Naive thymus-derived CD8-positive, alpha-beta T cell (primary cell): ENCODE measurements at regions of chr10 and their contacts with region 1.

Region 1: GRCh38 chr10:29735596-29736318 is 101.0 kb upstream of the SVIL start:
- DNase-seq: peak; percentile 63 to 85 (median 78)
- ATAC-seq: peak; percentile 78 to 79
- H3K4me3 Mint-ChIP-seq: peak overlapping the region; percentile 79 to 92 (median 84)
- H3K27ac Mint-ChIP-seq: peak overlapping the region in 5 of 10 donors; percentile 56 to 92 (median 81)
- H3K4me1 Mint-ChIP-seq: peaks cover 19 to 48% (median 43%) of the 10 kb centered on the region in 4 donors
- H3K27me3 Mint-ChIP-seq: peaks cover 0 to 2% (median 0%) of the 10 kb centered on the region in 5 donors

Region 2: DNA sequence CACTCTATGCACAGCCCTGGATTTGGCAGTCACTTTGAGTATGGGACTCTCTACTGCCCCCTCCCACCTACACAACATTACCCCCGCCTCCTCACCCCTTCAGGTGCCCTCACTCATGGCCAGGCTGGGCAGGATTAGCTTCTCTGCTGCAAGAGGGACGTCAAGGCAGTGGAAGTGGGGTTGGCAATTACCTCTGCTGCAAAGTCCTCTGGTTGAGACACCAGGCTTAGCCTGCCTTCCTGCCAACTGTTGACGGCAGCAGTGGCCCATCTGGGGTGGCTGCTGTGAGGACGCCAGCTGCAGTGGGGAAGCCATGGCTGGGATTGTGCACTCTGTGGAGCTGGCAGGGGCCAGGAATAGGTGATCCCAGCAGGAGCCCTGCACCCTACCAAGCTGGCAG is 127.7 kb before region 1 on chr10:
- POLR2A ChIA-PET with region 1: no interaction called
- DNase-seq: no peak
- ATAC-seq: no peak
- H3K4me3 Mint-ChIP-seq: no peak overlapping the region
- H3K27ac Mint-ChIP-seq: peak overlapping the region in 1 of 10 donors; percentile 56
- H3K4me1 Mint-ChIP-seq: peaks cover 2 to 19% (median 8%) of the 10 kb centered on the region in 4 donors
- H3K27me3 Mint-ChIP-seq: no peaks in the 10 kb centered on the region

Region 3: GRCh38 chr10:29681676-29682448 is 53.9 kb before region 1 on chr10:
- POLR2A ChIA-PET with region 1: interaction called, 33 read pairs
- DNase-seq: peak in 9 of 10 donors; percentile 47 to 88 (median 67)
- ATAC-seq: peak; percentile 96 to 98
- H3K4me3 Mint-ChIP-seq: peak overlapping the region; percentile 61 to 87 (median 81)
- H3K27ac Mint-ChIP-seq: peak overlapping the region; percentile 93 to 98 (median 95)
- H3K4me1 Mint-ChIP-seq: peaks cover 50 to 96% (median 87%) of the 10 kb centered on the region in 4 donors
- H3K27me3 Mint-ChIP-seq: no peaks in the 10 kb centered on the region

Region 4: GRCh38 chr10:29725133-29725720 is 10.5 kb before region 1 on chr10:
- POLR2A ChIA-PET with region 1: interaction called, 10 read pairs
- DNase-seq: no peak
- ATAC-seq: no peak
- H3K4me3 Mint-ChIP-seq: peak overlapping the region in 7 of 10 donors; percentile 15 to 74 (median 58)
- H3K27ac Mint-ChIP-seq: peak overlapping the region in 9 of 10 donors; percentile 32 to 83 (median 74)
- H3K4me1 Mint-ChIP-seq: peaks cover 32 to 61% (median 54%) of the 10 kb centered on the region in 4 donors
- H3K27me3 Mint-ChIP-seq: no peaks in the 10 kb centered on the region

Region 5: DNA sequence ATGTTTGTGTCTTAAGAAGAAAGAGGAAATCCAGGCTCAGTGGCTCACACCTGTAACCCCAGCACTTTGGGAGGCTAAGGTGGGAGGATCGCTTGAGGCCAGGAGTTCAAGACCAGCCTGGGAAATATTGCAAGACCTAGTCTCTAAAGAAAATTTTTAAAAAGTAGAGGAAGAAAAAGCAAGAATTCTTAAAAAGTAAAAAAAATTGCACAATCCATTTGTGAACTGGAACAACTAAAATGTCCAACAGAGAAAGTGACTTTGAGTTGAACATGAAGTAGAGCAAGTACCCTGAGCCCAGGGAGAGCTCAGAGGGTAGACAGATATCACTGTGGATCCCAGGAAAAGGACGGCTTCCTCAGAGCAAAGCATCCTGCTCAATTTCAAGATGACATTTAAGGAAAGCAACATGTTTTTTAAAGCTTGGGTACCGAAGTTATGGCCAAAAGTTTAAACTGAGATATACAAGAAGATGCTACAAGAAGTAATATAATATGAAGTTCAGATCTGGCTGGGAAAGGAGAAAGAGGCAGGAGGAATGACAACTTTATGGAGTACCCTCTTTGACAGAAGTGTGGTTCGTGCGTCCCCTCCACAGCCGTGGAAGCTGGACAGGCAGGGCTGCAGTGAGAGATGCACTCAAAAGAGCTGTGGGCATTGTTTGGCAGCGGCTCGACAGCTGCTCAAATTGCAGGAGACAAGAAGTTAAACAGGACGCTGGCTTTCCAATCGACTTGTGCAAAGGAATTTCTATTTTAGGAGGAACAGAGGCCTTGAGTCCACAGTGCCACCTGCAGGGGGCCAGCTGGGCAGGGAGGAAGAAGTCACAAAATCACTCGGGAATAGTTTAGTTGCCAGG is 122.3 kb after region 1 on chr10:
- POLR2A ChIA-PET with region 1: no interaction called
- DNase-seq: no peak
- ATAC-seq: no peak
- H3K4me3 Mint-ChIP-seq: no peak overlapping the region
- H3K27ac Mint-ChIP-seq: peak overlapping the region in 1 of 10 donors; percentile 75
- H3K4me1 Mint-ChIP-seq: peaks cover 0 to 4% (median 0%) of the 10 kb centered on the region in 4 donors
- H3K27me3 Mint-ChIP-seq: peaks cover 0 to 15% (median 2%) of the 10 kb centered on the region in 5 donors